ENCODE measurements at regions of chr12 and their contacts with region 1.

Region 1: GRCh38 chr12:69639400-69640016 is 28.8 kb upstream of the LRRC10 start:
- DNase-seq: peak; percentile 72
- ATAC-seq: peak; percentile 44

Region 2: DNA sequence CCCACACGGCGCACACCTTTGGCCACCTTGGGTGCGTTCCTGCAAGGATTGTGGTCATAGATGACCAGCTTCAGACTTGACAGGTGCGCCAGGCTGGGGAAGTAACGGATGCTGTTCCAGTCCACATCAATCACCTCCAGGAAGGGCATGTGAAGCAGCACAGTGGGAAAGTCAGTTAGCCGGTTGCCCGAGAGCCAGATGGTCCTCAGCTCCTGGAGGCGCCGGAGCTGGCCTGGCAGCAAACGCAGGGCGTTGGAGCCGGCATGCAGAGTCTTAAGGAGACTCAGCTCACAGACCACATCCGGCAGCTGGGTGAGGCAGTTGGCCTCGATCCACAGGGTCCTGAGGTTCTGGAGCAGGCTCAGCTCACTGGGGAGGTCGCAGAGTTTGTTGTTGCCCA is 29.4 kb before region 1 on chr12:
- intact Hi-C with region 1: loop called (anchors 2 kb)
- DNase-seq: no peak
- ATAC-seq: peak; percentile 32

Region 3: GRCh38 chr12:69662764-69663163 is 23.3 kb after region 1 on chr12:
- intact Hi-C with region 1: no loop called
- DNase-seq: no peak
- ATAC-seq: no peak

Region 4: DNA sequence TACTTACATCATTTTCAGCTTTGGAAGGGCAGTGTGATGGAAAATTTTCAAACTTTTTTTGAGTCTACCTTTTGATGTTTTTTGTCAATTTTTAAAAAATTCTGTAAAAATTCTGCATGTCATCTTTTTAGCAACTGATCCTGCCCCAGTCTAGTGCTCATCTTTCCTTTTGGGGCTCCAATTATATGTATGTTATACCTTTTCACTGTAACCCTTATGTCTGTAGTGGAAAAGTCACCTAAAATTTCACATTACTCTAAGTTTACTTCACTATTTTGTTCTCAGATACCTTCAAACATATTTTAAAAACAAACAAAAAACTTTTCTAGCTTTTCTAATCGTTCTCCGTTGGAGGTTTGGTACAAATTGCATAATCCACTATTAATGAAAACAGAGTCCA is 153.0 kb after region 1 on chr12:
- intact Hi-C with region 1: no loop called
- DNase-seq: no peak
- ATAC-seq: no peak

Region 5: DNA sequence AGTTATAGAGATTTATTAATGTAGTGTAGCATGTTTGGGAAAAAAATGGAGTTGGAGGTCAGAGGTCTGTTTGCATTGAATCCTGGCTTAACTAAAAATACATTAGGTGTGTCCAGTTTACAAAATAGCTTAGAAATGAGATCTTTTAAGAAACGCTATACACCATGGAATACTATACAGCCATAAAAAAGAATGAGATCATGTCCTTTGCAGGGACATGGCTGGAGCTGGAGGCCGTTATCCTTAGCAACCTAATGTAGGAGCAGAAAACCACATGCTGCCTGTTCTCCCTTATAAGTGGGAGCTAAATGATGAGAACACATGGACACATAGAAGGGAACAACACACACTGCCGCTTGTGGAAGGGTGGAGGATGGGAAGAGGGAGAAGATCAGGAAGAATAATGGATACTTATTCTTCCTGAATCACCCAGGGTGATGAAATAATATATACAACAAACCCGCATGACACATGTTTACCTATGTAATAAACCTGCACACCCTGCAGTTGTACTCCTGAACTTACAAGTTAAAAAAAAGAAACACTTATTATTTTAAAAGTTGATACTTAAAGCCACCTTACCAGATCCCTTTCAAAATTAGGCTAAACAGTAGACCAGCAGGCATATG is 171.5 kb after region 1 on chr12:
- intact Hi-C with region 1: no loop called
- DNase-seq: no peak
- ATAC-seq: no peak